Head of caudate nucleus (tissue), 42 donors: ENCODE measurements at regions of chr19 and their contacts with region 1.

Region 1: DNA sequence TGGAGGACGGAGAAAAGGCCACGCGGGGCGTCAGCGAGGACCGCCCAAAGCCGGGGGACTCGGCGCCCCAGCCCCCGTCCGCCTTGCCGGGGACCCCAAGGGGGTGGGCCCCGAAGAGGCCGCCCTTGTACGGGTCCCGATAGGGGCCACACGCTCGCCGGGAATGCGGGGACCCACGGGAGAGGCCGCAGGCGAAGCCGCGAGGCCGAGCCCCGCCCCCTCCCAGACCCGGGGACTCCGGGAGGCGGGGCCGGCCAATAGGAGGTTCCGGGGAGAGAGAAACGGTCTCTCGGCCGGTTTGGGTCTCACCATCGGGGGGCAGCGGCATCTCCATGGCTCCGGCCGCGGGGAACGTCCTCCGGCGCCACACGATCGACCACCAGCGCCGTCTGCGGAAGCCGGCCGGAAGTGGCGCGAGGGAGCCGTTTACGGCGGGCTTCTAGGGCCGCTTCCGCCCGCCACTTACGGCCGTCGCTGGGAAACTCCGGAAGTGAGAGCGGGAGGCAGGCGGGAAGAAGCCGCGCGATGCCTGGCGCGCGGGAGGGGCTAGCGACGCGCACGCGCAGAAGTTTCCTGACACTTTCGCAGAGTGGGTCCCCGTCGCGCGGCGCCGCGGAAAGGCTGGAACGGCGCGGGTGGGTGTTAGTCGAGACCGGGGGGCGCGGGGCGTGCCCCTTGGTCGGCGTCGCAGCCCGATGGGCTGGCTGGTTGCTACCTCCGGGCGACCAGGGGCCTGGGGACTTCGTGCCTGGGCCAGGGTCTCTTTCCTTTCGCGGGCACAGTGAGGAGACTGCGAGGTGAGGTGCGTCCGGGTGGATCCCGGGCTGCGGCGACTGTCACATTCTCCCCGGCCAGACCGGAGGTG is at the start of gene CHERP:
- DNase-seq: peak; percentile 82 to 97 (median 95)

Region 2: GRCh38 chr19:16470911-16471811 is 71.1 kb before region 1 on chr19:
- intact Hi-C with region 1: loop called (anchors 5 kb)
- DNase-seq: peak in 29 of 42 donors; percentile 10 to 59 (median 34)